ENCODE measurements at regions of chr20 and their contacts with region 1.

Region 1: GRCh38 chr20:54633374-54634355 is 158.3 kb downstream of the DOK5 start:
- DNase-seq: peak; percentile 69
- CTCF ChIP-seq: no peak

Region 2: GRCh38 chr20:54219751-54220426 is 413.8 kb before region 1 on chr20:
- in situ Hi-C with region 1: loop called (anchors 10 kb)
- DNase-seq: no peak
- CTCF ChIP-seq: peak; percentile 20